ENCODE measurements at regions of chr1 and their contacts with region 1.

Region 1: GRCh38 chr1:214261206-214262123 is 19.5 kb upstream of the SMYD2 start:
- DNase-seq: peak; percentile 51
- CTCF ChIP-seq: peak; percentile 98

Region 2: DNA sequence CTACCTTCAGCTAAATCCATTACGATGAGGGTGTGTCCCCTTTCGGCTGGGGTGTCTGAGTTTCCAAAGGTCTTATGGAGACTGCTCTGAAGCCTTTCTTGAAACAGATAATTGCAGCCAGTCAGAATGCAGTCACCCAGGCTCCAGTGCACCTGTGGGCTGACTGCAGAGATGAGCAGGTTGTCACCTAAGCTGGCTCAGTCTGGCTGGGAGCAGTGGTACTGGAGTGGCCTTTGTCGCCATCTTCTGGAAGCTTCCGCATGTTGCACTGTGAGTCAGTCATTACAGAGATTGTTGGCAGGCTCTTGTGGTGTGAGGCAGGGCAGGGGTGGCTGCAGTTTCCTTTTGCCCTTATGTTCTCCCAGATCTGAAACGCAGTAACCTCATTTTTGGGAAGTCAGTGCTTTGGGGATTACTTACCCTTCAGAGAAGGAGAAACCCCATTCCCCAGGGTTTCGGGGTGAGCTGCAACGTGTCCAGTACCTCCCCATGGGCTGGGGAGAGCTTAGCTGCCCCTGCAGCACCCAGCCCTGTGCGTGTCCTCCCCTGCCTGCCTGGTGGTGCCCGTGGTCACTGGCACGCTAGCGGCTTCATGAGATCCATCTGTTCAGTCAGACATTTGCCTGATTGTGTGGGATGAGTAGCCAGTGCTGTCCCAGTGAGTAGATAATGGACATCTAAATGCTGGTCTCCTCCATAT is 67.5 kb after region 1 on chr1:
- in situ Hi-C with region 1: loop called (anchors 10 kb)
- DNase-seq: peak; percentile 78
- CTCF ChIP-seq: peak; percentile 93

Region 3: DNA sequence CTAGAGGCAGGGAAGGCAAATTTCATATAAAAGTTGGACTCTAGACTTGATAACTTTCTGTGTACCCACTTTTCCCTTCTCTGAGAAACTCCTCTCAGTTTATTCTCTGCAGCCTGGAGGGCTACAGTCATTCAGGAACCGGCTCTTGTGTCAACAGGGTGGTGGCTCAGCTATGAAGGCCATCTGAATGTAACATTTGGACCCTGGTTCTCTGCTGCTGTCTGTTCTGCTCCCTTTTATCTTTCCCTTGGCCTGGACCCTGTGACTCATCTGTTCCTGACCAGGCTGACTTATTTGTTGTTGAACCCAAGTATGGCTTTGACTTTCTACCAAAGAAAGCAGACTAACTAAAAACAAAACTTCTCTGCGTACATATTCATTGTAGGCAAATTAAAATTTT is 416.9 kb after region 1 on chr1:
- in situ Hi-C with region 1: no loop called
- DNase-seq: no peak
- CTCF ChIP-seq: no peak

Measured in GM13977 (cell line).